ENCODE measurements at regions of chr19 and their contacts with region 1.

Region 1: DNA sequence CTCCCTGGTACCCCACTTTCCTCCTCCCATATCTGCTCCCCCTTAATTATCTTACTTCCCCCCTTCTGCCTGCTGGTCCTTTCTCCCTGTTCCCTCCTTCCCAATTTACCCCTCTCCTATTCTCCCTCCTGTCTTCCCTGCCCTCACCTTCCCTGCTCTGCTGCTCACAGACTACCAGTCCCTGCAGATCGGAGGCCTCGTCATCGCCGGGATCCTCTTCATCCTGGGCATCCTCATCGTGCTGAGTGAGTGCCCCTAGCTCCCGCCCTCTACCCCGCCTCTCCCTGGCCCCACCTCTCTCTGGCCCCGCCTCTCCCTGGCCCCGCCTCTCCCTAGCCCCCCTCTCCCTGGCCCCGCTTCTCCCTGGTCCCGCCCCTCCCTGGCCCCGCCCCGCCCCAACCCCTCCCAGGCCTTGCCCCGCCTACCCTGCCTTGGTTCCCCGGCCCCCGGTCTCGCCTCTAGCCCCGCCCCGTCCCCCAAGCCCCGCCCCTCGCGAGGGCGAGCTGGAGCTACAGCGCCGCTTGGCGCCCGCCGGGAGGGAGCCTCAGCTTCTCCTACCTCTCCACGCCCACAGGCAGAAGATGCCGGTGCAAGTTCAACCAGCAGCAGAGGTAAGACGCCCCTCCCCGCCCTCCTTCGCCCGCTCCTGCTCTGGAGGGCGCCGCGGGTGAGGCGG is 2.0 kb upstream of the FXYD7 start:
- DNase-seq: peak; percentile 87
- ATAC-seq: peak; percentile 86
- H3K4me3 ChIP-seq: peak overlapping the region in 4 of 5 experiments; percentile 43 to 58 (median 52)
- H3K4me3 Mint-ChIP-seq: peak overlapping the region; percentile 92
- H3K27ac ChIP-seq: no peak overlapping the region
- H3K27ac Mint-ChIP-seq: peak overlapping the region; percentile 88
- H3K4me1 ChIP-seq: peaks cover 25 to 52% of the 10 kb centered on the region in 2 donors
- H3K4me1 Mint-ChIP-seq: peaks cover 46% of the 10 kb centered on the region
- H3K27me3 ChIP-seq: peaks cover 0 to 13% (median 3%) of the 10 kb centered on the region in 4 experiments
- H3K27me3 Mint-ChIP-seq: peaks cover 14% of the 10 kb centered on the region
- CTCF ChIP-seq: peak; percentile 35

Region 2: DNA sequence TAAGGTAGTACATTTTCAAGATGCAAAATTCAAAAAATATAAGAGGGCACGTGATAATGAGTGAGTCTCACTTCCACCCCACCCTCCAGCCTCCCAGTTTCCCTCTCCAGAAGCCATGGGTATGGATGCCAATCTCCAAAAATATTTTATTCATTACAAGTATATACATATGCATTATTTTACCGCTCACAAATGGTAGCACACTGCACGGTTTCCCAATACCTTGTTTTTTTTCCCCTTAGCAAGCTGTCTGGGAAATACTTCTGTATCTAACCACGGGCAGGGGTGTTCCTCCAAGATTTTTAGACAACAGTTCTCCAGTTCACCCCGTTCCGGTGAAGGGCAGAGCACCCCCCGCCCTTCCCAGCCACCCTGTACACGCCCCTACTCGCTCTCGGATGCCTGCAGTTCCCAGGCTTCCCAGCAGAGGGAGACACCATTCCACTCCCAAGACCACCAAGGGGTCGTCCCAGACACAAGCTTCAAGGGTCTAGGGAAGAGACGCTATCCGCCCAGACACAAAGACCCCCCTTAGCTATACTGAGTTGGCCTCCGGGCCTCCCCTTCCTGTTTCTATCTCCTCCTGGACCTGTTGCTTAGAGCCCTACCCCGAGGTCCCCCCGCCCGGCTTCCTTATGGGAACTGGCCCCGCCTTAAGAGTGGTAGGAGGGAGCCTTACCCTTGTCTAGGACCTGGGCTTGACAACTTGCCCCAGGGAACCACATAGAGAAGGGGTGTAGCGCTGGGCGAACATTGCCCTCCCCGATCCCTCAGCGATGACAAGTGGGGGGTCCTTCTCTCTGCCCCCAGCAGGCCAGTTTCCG is 26.5 kb before region 1 on chr19:
- CTCF ChIA-PET with region 1: interaction called, 31 read pairs
- POLR2A ChIA-PET with region 1: no interaction called
- intact Hi-C with region 1: loop called (anchors 2 kb)
- DNase-seq: peak; percentile 80
- ATAC-seq: peak; percentile 92
- H3K4me3 ChIP-seq: peak overlapping the region in 1 of 5 experiments; percentile 24
- H3K4me3 Mint-ChIP-seq: peak overlapping the region; percentile 44
- H3K27ac ChIP-seq: no peak overlapping the region
- H3K27ac Mint-ChIP-seq: peak overlapping the region; percentile 46
- H3K4me1 ChIP-seq: peaks cover 7 to 9% of the 10 kb centered on the region in 2 donors
- H3K4me1 Mint-ChIP-seq: peaks cover 8% of the 10 kb centered on the region
- H3K27me3 ChIP-seq: peaks cover 0 to 26% (median 2%) of the 10 kb centered on the region in 4 experiments
- H3K27me3 Mint-ChIP-seq: peaks cover 7% of the 10 kb centered on the region
- CTCF ChIP-seq: peak; percentile 91

Region 3: DNA sequence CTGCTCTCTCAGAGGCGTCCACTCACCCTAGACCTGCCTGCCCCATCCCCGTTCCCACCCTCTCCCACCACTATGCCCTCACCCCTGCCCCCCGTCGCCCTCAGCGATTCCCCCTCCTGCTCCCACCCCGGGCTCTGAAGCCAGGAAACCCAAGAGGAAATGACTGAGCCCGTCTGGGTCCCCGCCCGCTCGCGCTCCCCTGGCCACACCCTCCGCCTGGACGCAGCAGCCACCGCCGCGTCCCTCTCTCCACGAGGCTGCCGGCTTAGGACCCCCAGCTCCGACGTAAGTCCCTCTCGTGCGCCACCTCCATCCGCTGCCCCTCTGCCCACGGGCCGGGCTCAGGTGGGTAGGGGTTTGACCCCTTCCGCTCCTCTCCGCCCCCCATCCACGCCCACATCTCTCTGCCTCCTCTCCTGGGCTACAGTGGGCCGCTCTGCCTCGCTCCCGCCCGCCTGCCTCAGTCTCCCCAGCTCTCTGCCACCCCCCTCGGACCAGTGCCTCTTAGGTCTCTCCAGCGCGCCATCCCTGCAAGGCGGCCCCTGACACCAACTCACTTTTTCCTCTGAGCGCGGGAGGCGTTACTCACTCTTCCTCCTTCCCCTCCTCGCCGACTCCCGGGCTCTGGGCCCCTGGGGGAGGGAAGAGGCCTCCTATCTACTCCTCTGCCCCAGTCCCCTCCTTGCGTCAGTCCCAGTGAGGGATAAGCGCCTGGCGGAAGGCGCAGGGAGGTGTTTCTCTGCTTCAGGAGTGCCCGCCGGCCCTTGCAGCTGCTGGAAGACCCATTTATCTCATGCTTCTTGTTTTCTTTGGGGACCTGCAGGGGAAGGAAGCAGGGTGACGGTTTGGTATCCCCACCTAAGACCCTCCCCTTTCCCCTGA is 13.7 kb after region 1 on chr19 and contains the start of gene FXYD5:
- CTCF ChIA-PET with region 1: interaction called, 77 read pairs
- POLR2A ChIA-PET with region 1: interaction called, 9 read pairs
- intact Hi-C with region 1: loop called (anchors 1 kb)
- DNase-seq: peak; percentile 64
- ATAC-seq: peak; percentile 72
- H3K4me3 ChIP-seq: peak within 1 kb of the TSS; percentile 51 to 93 (median 90)
- H3K4me3 Mint-ChIP-seq: peak within 1 kb of the TSS; percentile 100
- H3K27ac ChIP-seq: peak within 1 kb of the TSS; percentile 43 to 85
- H3K27ac Mint-ChIP-seq: peak within 1 kb of the TSS; percentile 97
- H3K4me1 ChIP-seq: peaks cover 20 to 25% of the 10 kb centered on the region in 2 donors
- H3K4me1 Mint-ChIP-seq: peaks cover 49% of the 10 kb centered on the region
- H3K27me3 ChIP-seq: peaks cover 0 to 3% (median 0%) of the 10 kb centered on the region in 4 experiments
- H3K27me3 Mint-ChIP-seq: no peaks in the 10 kb centered on the region
- CTCF ChIP-seq: no peak
- total RNA-seq, gene FXYD5: 293 and 310 TPM in 2 replicates

Region 4: DNA sequence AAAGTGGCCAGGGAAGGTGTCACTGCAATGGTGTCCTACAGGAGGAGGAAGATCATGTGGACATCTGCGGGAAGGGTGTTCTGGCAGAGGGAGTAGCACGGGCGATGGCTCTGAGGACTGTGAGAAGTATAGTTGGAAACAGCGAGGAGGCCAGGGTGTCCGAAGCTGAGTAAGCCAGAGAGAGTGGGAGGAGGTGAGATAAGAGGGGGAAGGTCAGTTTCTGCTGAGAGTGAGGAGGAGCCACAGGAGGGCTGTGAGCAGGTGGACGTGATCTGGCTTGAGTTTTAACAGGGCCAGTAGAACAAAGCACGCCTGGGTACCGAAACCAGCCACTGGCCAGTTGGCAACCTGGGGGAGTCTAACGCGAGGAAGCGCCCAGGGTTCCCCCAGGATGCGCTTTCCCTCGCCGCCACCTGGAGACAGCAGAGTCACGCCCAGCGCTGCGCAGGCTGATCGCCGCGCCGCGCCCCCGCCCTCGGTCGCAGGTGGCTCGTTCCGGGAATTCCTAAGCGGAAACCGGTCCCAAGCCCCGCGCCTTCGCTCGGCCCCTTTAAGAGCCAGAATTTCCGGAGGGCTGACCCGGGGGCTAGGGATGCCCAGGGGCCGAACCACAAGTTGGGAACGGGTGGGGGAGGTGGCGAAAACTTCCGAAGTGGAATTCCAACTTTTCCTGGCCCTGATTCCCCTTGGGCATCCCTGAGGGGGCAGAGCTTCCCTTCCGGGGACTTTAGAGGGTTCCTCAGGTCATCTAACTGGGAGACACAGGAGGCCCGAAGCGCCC is 106.6 kb after region 1 on chr19:
- CTCF ChIA-PET with region 1: interaction called, 4 read pairs
- POLR2A ChIA-PET with region 1: no interaction called
- intact Hi-C with region 1: loop called (anchors 1 kb)
- DNase-seq: peak; percentile 83
- ATAC-seq: peak; percentile 41
- H3K4me3 ChIP-seq: peak overlapping the region; percentile 30 to 93 (median 76)
- H3K4me3 Mint-ChIP-seq: peak overlapping the region; percentile 89
- H3K27ac ChIP-seq: peak overlapping the region; percentile 77 to 86
- H3K27ac Mint-ChIP-seq: peak overlapping the region; percentile 98
- H3K4me1 ChIP-seq: peaks cover 13 to 30% of the 10 kb centered on the region in 2 donors
- H3K4me1 Mint-ChIP-seq: peaks cover 24% of the 10 kb centered on the region
- H3K27me3 ChIP-seq: peaks cover 0 to 6% (median 0%) of the 10 kb centered on the region in 4 experiments
- H3K27me3 Mint-ChIP-seq: peaks cover 12% of the 10 kb centered on the region
- CTCF ChIP-seq: peak; percentile 72

Region 5: DNA sequence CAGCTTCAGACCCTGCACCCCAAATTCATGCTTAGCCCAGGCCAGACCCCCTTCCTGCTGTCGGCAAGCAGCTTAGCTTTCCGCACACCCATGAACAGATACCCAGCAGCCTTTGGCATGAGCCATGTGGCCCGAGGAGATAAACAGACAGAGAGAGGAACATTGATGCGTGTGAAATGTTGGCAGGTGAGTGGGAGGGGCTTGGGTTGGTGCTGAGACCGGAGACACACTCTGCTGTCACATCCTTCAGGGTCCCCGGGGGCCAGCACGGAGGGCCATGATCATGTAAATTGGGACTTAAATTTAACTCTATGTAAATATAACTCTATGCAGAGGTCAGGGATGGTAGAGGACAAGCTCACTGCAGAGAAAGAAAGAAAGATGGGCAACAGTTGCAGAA is 189.4 kb after region 1 on chr19:
- CTCF ChIA-PET with region 1: interaction called, 5 read pairs
- POLR2A ChIA-PET with region 1: interaction called, 4 read pairs
- intact Hi-C with region 1: loop called (anchors 10 kb)
- DNase-seq: peak; percentile 94
- ATAC-seq: peak; percentile 84
- H3K4me3 ChIP-seq: peak overlapping the region; percentile 83 to 100 (median 89)
- H3K4me3 Mint-ChIP-seq: peak overlapping the region; percentile 93
- H3K27ac ChIP-seq: peak overlapping the region; percentile 79 to 90
- H3K27ac Mint-ChIP-seq: peak overlapping the region; percentile 96
- H3K4me1 ChIP-seq: peaks cover 68 to 83% of the 10 kb centered on the region in 2 donors
- H3K4me1 Mint-ChIP-seq: peaks cover 75% of the 10 kb centered on the region
- H3K27me3 ChIP-seq: no peaks in the 10 kb centered on the region
- H3K27me3 Mint-ChIP-seq: no peaks in the 10 kb centered on the region
- CTCF ChIP-seq: no peak

Region 6: GRCh38 chr19:35495107-35496064 is 354.3 kb after region 1 on chr19:
- CTCF ChIA-PET with region 1: interaction called, 7 read pairs
- POLR2A ChIA-PET with region 1: no interaction called
- intact Hi-C with region 1: loop called (anchors 10 kb)
- DNase-seq: peak; percentile 82
- ATAC-seq: peak; percentile 99
- H3K4me3 ChIP-seq: peak overlapping the region in 1 of 5 experiments; percentile 24
- H3K4me3 Mint-ChIP-seq: no peak overlapping the region
- H3K27ac ChIP-seq: no peak overlapping the region
- H3K27ac Mint-ChIP-seq: no peak overlapping the region
- H3K4me1 ChIP-seq: peaks cover 6 to 11% of the 10 kb centered on the region in 2 donors
- H3K4me1 Mint-ChIP-seq: peaks cover 8% of the 10 kb centered on the region
- H3K27me3 ChIP-seq: peaks cover 0 to 6% (median 2%) of the 10 kb centered on the region in 4 experiments
- H3K27me3 Mint-ChIP-seq: peaks cover 9% of the 10 kb centered on the region
- CTCF ChIP-seq: peak; percentile 100